Activated CD4-positive, alpha-beta memory T cell treated with anti-CD3 and anti-CD28 coated beads, Interleukin-2, amount 10 ng/mL, durations not matched to agents 7 days and 5 days (primary cell): ENCODE measurements at regions of chr2 and their contacts with region 1.

Region 1: DNA sequence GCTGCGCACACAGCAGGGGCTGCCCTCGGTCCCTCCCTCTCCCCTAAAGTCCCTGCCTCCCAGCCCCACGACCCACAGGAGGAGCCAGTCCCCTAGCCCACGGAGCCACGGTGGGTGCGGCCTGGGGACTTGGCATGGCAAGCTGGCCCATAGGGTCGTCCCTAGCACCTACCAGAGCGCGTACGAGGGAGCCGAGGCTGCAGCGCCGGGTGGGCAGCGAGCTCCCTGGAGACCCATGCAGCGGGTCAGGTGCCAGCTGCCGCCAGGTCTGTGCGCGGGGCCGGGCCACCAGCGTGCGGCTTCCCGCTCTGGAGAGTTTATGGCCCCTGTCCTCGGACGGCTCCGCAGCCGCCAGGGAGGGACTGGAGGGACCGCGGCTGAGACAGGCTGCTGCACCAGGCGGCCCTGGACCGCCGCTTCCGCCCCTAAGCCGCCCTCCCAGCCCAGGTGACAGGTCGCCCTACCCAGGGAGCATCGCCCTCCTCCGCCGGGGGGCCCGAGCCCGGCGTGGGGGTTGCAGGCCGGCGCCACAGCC is 273.6 kb downstream of the CCDC74A start:
- DNase-seq: no peak
- H3K4me3 Mint-ChIP-seq: no peak overlapping the region
- H3K27ac Mint-ChIP-seq: no peak overlapping the region
- H3K4me1 Mint-ChIP-seq: no peaks in the 10 kb centered on the region
- H3K27me3 Mint-ChIP-seq: peaks cover 5% of the 10 kb centered on the region

Region 2: GRCh38 chr2:131682122-131682944 is 118.9 kb before region 1 on chr2:
- CTCF ChIA-PET with region 1: interaction called, 14 read pairs
- POLR2A ChIA-PET with region 1: no interaction called
- DNase-seq: peak; percentile 79
- H3K4me3 Mint-ChIP-seq: peak overlapping the region; percentile 80
- H3K27ac Mint-ChIP-seq: peak overlapping the region; percentile 69
- H3K4me1 Mint-ChIP-seq: peaks cover 45% of the 10 kb centered on the region
- H3K27me3 Mint-ChIP-seq: peaks cover 5% of the 10 kb centered on the region

Region 3: DNA sequence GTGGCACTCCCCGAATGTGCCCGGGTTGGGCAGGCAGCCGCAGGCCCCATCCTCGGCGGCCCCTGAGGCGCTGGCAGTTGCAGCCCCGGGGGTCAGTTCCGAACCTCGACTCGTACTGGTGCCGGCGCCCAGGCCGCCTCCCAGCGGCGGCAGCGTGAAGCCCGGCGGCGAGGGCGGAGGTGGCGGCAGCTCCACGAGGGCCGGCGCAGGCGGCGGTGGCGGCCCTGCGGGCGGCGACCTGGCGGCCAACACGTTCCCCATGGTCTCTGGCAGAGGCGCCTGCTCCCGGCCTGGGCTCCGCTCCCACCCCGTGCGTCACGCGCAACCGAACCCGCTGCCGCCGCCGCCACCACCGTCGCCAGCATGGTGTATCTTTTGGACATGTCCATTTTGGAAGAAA is 77.3 kb before region 1 on chr2:
- CTCF ChIA-PET with region 1: no interaction called
- POLR2A ChIA-PET with region 1: no interaction called
- DNase-seq: no peak
- H3K4me3 Mint-ChIP-seq: no peak overlapping the region
- H3K27ac Mint-ChIP-seq: no peak overlapping the region
- H3K4me1 Mint-ChIP-seq: no peaks in the 10 kb centered on the region
- H3K27me3 Mint-ChIP-seq: peaks cover 10% of the 10 kb centered on the region